ENCODE measurements at regions of chr2 and their contacts with region 1.

Region 1: GRCh38 chr2:127479219-127479825 is 47.0 kb downstream of the IWS1 start:
- DNase-seq: peak; percentile 75 to 87 (median 81)
- H3K4me3 ChIP-seq: no peak overlapping the region
- H3K27ac ChIP-seq: no peak overlapping the region
- H3K4me1 ChIP-seq: peaks cover 0 to 5% (median under 1%) of the 10 kb centered on the region in 4 experiments
- H3K27me3 ChIP-seq: no peaks in the 10 kb centered on the region

Region 2: GRCh38 chr2:127324635-127325034 is 154.7 kb before region 1 on chr2:
- CTCF ChIA-PET with region 1: interaction called, 57 read pairs
- POLR2A ChIA-PET with region 1: no interaction called
- DNase-seq: peak; percentile 41 to 74 (median 63)
- H3K4me3 ChIP-seq: no peak overlapping the region
- H3K27ac ChIP-seq: no peak overlapping the region
- H3K4me1 ChIP-seq: no peaks in the 10 kb centered on the region
- H3K27me3 ChIP-seq: no peaks in the 10 kb centered on the region

Region 3: GRCh38 chr2:127342101-127342500 is 137.2 kb before region 1 on chr2:
- CTCF ChIA-PET with region 1: interaction called, 11 read pairs
- POLR2A ChIA-PET with region 1: no interaction called
- DNase-seq: peak in 2 of 3 donors; percentile 45 to 61
- H3K4me3 ChIP-seq: no peak overlapping the region
- H3K27ac ChIP-seq: no peak overlapping the region
- H3K4me1 ChIP-seq: no peaks in the 10 kb centered on the region
- H3K27me3 ChIP-seq: no peaks in the 10 kb centered on the region

Region 4: DNA sequence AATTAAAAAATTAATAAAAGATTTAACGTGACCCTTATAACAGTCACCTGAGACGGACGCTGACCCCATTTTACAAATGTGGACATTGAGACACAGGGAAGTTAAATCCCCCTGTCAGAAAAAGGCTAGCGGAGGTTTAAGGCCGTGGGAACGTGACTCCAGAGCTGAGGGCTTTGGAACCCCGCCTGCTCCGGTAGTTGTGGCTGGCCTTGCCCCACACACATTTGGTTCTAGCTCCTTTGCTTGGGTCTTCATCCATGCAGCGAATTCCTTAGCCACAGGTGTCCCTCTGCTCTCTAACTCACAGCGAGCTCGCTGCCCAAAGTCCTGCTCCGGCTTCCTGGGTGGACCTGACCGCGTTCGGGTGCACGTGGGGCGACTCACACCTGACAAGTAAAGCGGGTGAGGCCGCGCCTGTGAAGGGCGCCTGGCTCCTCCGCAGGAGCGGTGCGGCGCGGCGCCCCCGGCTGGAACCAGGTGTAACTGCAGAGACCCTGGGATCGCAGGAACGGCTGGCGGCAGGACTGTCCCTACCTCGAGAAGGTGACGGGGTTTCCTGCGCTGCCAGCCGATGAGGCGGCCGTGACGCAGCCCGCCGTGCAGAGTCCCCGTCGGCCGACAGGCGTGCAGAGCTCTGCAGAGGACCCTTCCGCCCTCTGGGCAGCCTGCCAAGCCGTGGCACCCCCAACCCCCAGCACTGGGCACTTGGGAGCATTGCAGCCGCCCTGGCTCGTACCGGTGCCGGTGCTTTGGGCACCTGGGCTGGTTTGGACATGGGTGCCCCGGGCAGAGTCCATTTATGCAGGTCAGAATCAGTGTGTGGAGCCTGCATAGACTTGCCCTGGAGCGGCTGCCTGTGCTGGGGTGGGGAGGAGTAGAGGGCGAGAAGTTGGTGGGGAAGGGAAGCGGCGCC is 63.5 kb before region 1 on chr2:
- CTCF ChIA-PET with region 1: interaction called, 17 read pairs
- POLR2A ChIA-PET with region 1: no interaction called
- DNase-seq: peak; percentile 79 to 92 (median 89)
- H3K4me3 ChIP-seq: peak overlapping the region; percentile 25 to 82 (median 67)
- H3K27ac ChIP-seq: no peak overlapping the region
- H3K4me1 ChIP-seq: peaks cover 3 to 58% (median 27%) of the 10 kb centered on the region in 4 experiments
- H3K27me3 ChIP-seq: peaks cover 0 to 1% (median 0%) of the 10 kb centered on the region in 5 experiments

Region 5: DNA sequence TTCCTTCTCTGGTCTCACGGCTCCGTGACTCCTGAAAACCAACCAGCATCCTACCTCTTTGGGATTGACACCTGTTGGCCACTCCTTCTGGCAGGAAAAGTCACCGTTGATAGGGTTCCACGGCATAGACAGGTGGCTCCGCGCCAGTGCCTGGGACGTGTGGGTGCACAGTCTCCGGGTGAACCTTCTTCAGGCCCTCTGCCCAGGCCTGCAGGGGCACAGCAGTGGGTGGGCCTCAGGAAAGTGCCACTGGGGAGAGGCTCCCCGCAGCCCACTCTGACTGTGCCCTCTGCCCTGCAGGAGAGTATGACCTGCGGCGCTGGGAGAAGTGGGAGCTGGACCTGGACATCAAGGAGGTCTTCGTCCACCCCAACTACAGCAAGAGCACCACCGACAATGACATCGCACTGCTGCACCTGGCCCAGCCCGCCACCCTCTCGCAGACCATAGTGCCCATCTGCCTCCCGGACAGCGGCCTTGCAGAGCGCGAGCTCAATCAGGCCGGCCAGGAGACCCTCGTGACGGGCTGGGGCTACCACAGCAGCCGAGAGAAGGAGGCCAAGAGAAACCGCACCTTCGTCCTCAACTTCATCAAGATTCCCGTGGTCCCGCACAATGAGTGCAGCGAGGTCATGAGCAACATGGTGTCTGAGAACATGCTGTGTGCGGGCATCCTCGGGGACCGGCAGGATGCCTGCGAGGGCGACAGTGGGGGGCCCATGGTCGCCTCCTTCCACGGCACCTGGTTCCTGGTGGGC is 51.1 kb before region 1 on chr2:
- CTCF ChIA-PET with region 1: interaction called, 11 read pairs
- POLR2A ChIA-PET with region 1: no interaction called
- DNase-seq: no peak
- H3K4me3 ChIP-seq: no peak overlapping the region
- H3K27ac ChIP-seq: no peak overlapping the region
- H3K4me1 ChIP-seq: peaks cover 0 to 14% (median 7%) of the 10 kb centered on the region in 4 experiments
- H3K27me3 ChIP-seq: peaks cover 0 to 2% (median 0%) of the 10 kb centered on the region in 5 experiments

Measured in common myeloid progenitor, CD34-positive (primary cell).